ENCODE measurements at regions of chr3 and their contacts with region 1.

Region 1: DNA sequence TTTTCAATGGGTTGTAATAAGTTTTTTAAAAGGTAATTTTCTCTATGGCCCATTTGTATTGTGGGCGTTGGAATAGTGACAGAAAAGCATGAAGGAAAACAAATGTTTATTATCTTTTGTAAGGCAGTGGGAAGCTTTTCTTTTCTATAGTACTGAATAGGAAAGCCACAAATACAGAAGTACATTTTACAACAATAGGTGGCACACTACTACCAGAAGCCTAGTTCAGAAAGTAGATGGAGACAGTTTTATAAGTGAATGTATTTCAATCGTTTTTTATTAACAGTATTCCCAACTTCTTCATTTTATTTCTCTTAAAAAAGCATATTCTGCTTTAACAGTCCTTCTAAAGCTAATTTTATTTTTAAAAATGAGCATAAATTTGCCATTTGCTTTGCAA is 296.7 kb downstream of the PTPRG start:
- DNase-seq: peak; percentile 27
- H3K4me3 ChIP-seq: no peak overlapping the region
- H3K27ac ChIP-seq: no peak overlapping the region
- H3K4me1 ChIP-seq: no peaks in the 10 kb centered on the region
- H3K27me3 ChIP-seq: no peaks in the 10 kb centered on the region
- CTCF ChIP-seq: peak; percentile 65
- EP300 ChIP-seq: no peak
- RAD21 ChIP-seq: peak; percentile 88

Region 2: GRCh38 chr3:61730042-61730441 is 128.0 kb before region 1 on chr3:
- CTCF ChIA-PET with region 1: no interaction called
- POLR2A ChIA-PET with region 1: no interaction called
- DNase-seq: no peak
- H3K4me3 ChIP-seq: no peak overlapping the region
- H3K27ac ChIP-seq: no peak overlapping the region
- H3K4me1 ChIP-seq: peaks cover 0 to 3% of the 10 kb centered on the region in 2 experiments; a peak in 1 of 4 replicates
- H3K27me3 ChIP-seq: no peaks in the 10 kb centered on the region
- CTCF ChIP-seq: no peak
- EP300 ChIP-seq: peak in 1 of 2 experiments; percentile 11; a peak in 1 of 4 replicates
- RAD21 ChIP-seq: no peak

Region 3: DNA sequence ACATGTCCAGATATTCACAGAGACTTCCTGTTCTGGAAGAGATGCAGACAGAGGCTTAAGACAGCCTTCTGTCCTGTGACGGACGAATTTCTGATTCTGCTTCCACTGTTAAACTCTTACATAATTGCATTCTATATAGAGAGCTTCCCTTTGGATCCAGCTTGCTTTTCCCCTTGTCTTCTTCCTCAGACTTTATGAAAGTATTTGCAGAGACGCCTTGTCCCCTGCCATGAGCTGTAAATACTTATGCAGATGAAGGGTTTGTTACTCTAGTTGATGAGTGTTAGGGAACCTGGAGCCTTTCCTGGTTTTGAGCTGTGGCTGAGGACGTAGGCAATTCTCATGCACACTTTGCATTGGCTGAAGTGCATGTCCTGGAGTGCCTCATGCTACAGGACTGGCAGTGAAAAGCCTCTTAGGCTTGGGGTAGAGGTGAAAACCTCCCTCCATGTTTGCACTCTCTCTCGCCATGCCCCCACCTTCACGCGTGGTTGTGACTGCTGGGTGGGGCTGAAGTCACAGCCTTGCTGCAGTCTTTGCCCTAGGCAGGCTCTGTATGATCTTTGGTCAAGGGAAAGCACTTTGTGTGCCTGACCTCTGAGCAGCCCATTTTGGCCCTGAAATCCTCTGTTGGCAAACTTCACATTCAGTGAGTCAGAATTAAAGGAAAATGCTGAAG is 10.1 kb before region 1 on chr3:
- CTCF ChIA-PET with region 1: interaction called, 15 read pairs
- POLR2A ChIA-PET with region 1: no interaction called
- DNase-seq: no peak
- H3K4me3 ChIP-seq: no peak overlapping the region
- H3K27ac ChIP-seq: peak overlapping the region in 1 of 2 experiments; percentile 47; a peak in 2 of 4 replicates
- H3K4me1 ChIP-seq: peaks cover 0 to 10% of the 10 kb centered on the region in 2 experiments
- H3K27me3 ChIP-seq: no peaks in the 10 kb centered on the region
- CTCF ChIP-seq: no peak
- EP300 ChIP-seq: no peak
- RAD21 ChIP-seq: no peak

Region 4: GRCh38 chr3:62051507-62051906 is 193.5 kb after region 1 on chr3:
- CTCF ChIA-PET with region 1: interaction called, 27 read pairs
- POLR2A ChIA-PET with region 1: no interaction called
- DNase-seq: peak; percentile 13
- H3K4me3 ChIP-seq: no peak overlapping the region
- H3K27ac ChIP-seq: no peak overlapping the region
- H3K4me1 ChIP-seq: no peaks in the 10 kb centered on the region
- H3K27me3 ChIP-seq: no peaks in the 10 kb centered on the region
- CTCF ChIP-seq: peak; percentile 61
- EP300 ChIP-seq: no peak
- RAD21 ChIP-seq: peak; percentile 60

Region 5: GRCh38 chr3:62169906-62170660 is 312.0 kb after region 1 on chr3:
- CTCF ChIA-PET with region 1: interaction called, 20 read pairs
- POLR2A ChIA-PET with region 1: no interaction called
- DNase-seq: no peak
- H3K4me3 ChIP-seq: no peak overlapping the region
- H3K27ac ChIP-seq: peak overlapping the region in 1 of 2 experiments; percentile 76; a peak in 2 of 4 replicates
- H3K4me1 ChIP-seq: peaks cover 0 to 5% of the 10 kb centered on the region in 2 experiments; a peak in 2 of 4 replicates
- H3K27me3 ChIP-seq: no peaks in the 10 kb centered on the region
- CTCF ChIP-seq: no peak
- EP300 ChIP-seq: peak in 1 of 2 experiments; percentile 35; a peak in 1 of 4 replicates
- RAD21 ChIP-seq: no peak

Measured in SK-N-SH (cell line).